Spleen (tissue), 13 donors: ENCODE measurements at regions of chr12 and their contacts with region 1.

Region 1: DNA sequence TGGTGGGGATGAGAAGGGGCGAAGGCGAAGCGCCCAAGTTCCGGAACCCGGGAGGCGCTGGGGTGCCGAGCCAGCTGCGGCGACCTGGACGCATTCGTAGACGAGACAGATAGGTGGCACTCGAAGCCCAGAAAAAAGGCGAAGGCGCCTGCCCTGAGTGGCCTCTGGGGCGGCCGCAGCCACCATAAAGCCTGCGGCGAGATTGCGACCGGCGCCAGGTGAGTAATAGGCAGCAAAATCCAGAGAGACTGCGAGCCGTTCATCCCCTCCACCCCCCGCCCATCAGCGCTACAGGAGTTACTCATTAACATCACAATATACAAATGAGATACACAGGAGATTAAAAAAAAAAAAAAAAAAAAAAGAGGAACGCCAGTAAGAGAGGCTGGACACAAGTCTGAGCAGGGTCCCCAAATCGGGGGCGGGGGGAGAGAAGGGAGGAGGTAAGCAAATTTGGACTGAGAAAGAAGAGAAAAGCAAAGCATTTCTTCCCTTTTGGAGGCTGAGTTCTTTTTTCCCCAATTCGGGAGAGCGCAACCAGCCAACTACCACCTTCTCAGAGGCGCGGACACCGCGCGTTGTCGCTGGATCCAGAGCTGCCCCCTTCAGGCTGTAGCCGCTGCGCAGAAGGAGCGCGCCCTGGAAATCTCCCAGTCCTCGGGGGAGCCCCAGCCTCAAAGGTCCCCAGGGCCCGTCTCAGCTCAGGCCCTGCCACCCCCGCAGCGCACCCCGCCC is 15.7 kb downstream of the TBX3 start:
- DNase-seq: peak; percentile 76
- H3K4me3 ChIP-seq: peak overlapping the region; percentile 2 to 57 (median 25)
- H3K27ac ChIP-seq: peak overlapping the region in 2 of 8 donors; percentile 23 to 38
- H3K4me1 ChIP-seq: peaks cover 0 to 54% (median 15%) of the 10 kb centered on the region in 6 donors
- H3K27me3 ChIP-seq: peaks cover 5 to 100% (median 62%) of the 10 kb centered on the region in 7 donors
- CTCF ChIP-seq: peak in 9 of 11 experiments; percentile 10 to 63 (median 48)
- POLR2A ChIP-seq: no peak

Region 2: GRCh38 chr12:114799574-114800487 is 131.5 kb after region 1 on chr12:
- intact Hi-C with region 1: no loop called
- DNase-seq: no peak
- H3K4me3 ChIP-seq: no peak overlapping the region
- H3K27ac ChIP-seq: no peak overlapping the region
- H3K4me1 ChIP-seq: no peaks in the 10 kb centered on the region
- H3K27me3 ChIP-seq: no peaks in the 10 kb centered on the region
- CTCF ChIP-seq: no peak
- POLR2A ChIP-seq: no peak

Region 3: GRCh38 chr12:115752913-115753726 is 1084.8 kb after region 1 on chr12:
- intact Hi-C with region 1: loop called (anchors 2 kb)
- DNase-seq: no peak
- H3K4me3 ChIP-seq: no peak overlapping the region
- H3K27ac ChIP-seq: no peak overlapping the region
- H3K4me1 ChIP-seq: no peaks in the 10 kb centered on the region
- H3K27me3 ChIP-seq: peaks cover 0 to 37% (median 6%) of the 10 kb centered on the region in 7 donors
- CTCF ChIP-seq: peak in 9 of 11 experiments; percentile 18 to 66 (median 57)
- POLR2A ChIP-seq: no peak